Activated CD4-positive, alpha-beta T cell treated with anti-CD3 and anti-CD28 coated beads for 36 hours (primary cell): ENCODE measurements at regions of chr1 and their contacts with region 1.

Region 1: GRCh38 chr1:159214149-159214760 is 9.6 kb downstream of the ACKR1 start:
- DNase-seq: peak; percentile 59
- ATAC-seq: no peak
- H3K4me3 Mint-ChIP-seq: no peak overlapping the region
- H3K27ac Mint-ChIP-seq: no peak overlapping the region
- H3K4me1 Mint-ChIP-seq: no peaks in the 10 kb centered on the region
- H3K27me3 Mint-ChIP-seq: peaks cover 36% of the 10 kb centered on the region

Region 2: DNA sequence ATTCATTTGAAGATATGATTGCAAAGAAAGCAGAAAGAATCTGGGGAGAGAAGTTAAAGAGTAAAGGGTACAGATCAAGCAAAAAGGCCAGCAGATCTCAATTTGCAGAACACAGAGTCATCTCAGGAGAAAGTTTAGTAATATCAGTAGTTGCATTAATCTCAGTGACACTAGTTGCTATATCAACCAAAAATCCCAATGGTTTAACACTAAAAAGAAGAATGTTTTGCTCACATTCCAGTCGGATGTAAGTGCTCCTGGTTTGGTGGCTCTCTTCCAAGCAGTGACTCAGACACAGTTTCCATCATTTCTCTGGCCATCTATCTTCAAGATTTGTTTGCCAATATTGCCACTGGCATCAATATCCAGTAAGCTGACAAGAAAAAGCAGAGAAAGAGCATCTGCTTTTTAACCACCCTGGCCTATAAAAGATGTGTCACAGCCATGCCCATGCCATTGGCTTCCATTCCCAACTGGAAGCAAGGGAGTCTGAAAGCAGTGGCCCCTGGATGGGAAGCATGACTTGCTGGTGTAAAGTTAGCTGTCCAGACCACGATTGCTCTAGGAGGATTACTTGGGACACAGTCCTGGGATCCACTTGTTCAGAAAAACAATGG is 92.1 kb before region 1 on chr1:
- CTCF ChIA-PET with region 1: interaction called, 11 read pairs
- POLR2A ChIA-PET with region 1: no interaction called
- intact Hi-C with region 1: no loop called
- DNase-seq: no peak
- ATAC-seq: peak; percentile 70
- H3K4me3 Mint-ChIP-seq: no peak overlapping the region
- H3K27ac Mint-ChIP-seq: no peak overlapping the region
- H3K4me1 Mint-ChIP-seq: peaks cover 15% of the 10 kb centered on the region
- H3K27me3 Mint-ChIP-seq: peaks cover 33% of the 10 kb centered on the region

Region 3: DNA sequence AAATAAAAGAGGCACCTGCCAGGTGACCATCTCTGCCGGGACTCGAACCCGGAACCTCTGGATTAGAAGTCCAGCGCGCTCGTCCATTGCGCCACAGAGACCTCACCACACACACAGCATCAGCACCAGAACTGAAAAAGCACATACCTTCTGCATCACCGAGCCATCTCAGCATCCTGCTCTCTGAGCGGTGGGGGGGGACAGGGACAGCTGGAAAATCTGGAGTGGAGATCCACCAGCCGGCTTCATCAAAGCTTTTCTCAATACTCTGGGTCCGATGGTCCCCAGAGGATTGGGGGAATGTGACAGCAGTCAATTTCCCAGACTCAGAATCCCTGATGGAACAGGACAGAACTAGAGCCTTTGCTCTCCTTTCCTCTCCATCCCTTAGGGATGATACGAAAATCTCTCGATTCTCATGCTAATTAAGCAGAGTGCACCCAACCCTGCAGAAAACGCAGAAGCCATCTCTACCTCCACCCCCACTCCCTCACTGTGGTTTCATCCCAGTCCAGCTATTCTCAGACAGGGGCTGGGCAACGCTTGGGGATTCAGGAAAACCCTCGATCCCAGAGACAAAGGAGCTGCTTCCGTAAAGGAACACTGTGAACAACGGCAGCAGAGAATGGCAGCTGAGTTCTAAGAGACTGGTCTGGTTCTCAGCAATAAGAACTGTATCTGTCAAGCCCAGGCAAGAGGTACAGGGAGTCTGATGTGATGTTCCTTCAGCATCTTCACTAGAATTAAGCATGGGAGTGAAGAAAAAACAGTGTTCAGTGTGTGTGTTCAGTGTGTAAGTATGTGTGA is 72.5 kb before region 1 on chr1:
- CTCF ChIA-PET with region 1: interaction called, 132 read pairs
- POLR2A ChIA-PET with region 1: no interaction called
- intact Hi-C with region 1: no loop called
- DNase-seq: peak; percentile 14
- ATAC-seq: no peak
- H3K4me3 Mint-ChIP-seq: no peak overlapping the region
- H3K27ac Mint-ChIP-seq: no peak overlapping the region
- H3K4me1 Mint-ChIP-seq: no peaks in the 10 kb centered on the region
- H3K27me3 Mint-ChIP-seq: peaks cover 25% of the 10 kb centered on the region

Region 4: GRCh38 chr1:159197561-159198557 is 16.4 kb before region 1 on chr1:
- CTCF ChIA-PET with region 1: interaction called, 113 read pairs
- POLR2A ChIA-PET with region 1: no interaction called
- intact Hi-C with region 1: no loop called
- DNase-seq: peak; percentile 80
- ATAC-seq: peak; percentile 77
- H3K4me3 Mint-ChIP-seq: no peak overlapping the region
- H3K27ac Mint-ChIP-seq: no peak overlapping the region
- H3K4me1 Mint-ChIP-seq: peaks cover 4% of the 10 kb centered on the region
- H3K27me3 Mint-ChIP-seq: peaks cover 31% of the 10 kb centered on the region